ENCODE measurements at regions of chr21 and their contacts with region 1.

Region 1: GRCh38 chr21:41283211-41283818 is 33.3 kb upstream of the FAM3B start:
- DNase-seq: no peak
- H3K4me3 ChIP-seq: no peak overlapping the region
- H3K27ac ChIP-seq: no peak overlapping the region
- H3K4me1 ChIP-seq: peaks cover 0 to 3% (median 0%) of the 10 kb centered on the region in 4 donors
- H3K27me3 ChIP-seq: peaks cover 0 to 5% (median 0%) of the 10 kb centered on the region in 3 donors
- CTCF ChIP-seq: peak; percentile 56 to 74 (median 65)
- EP300 ChIP-seq: no peak
- POLR2A ChIP-seq: no peak

Region 2: GRCh38 chr21:40846587-40847411 is 436.5 kb before region 1 on chr21 and contains the start of gene DSCAM:
- intact Hi-C with region 1: no loop called
- DNase-seq: no peak
- H3K4me3 ChIP-seq: peak within 1 kb of the TSS in 2 of 4 donors; percentile 10 to 36
- H3K27ac ChIP-seq: no peak within 1 kb of the TSS
- H3K4me1 ChIP-seq: peaks cover 0 to 13% (median 4%) of the 10 kb centered on the region in 4 donors
- H3K27me3 ChIP-seq: peaks cover 4 to 45% (median 28%) of the 10 kb centered on the region in 3 donors
- CTCF ChIP-seq: no peak
- EP300 ChIP-seq: no peak
- POLR2A ChIP-seq: no peak
- total RNA-seq, gene DSCAM: 0.27 to 0.55 (median 0.34) TPM

Region 3: GRCh38 chr21:41361786-41362604 is 78.7 kb after region 1 on chr21 and contains the start of gene MX2:
- intact Hi-C with region 1: no loop called
- DNase-seq: peak; percentile 85
- H3K4me3 ChIP-seq: peak within 1 kb of the TSS; percentile 8 to 41 (median 34)
- H3K27ac ChIP-seq: peak within 1 kb of the TSS; percentile 70 to 80 (median 72)
- H3K4me1 ChIP-seq: peaks cover 0 to 22% (median 5%) of the 10 kb centered on the region in 4 donors
- H3K27me3 ChIP-seq: no peaks in the 10 kb centered on the region
- CTCF ChIP-seq: no peak
- EP300 ChIP-seq: peak in 1 of 4 donors; percentile 10
- POLR2A ChIP-seq: no peak
- total RNA-seq, gene MX2: 5.1 to 9.6 (median 7.3) TPM

Region 4: GRCh38 chr21:41777951-41778874 is 494.9 kb after region 1 on chr21:
- intact Hi-C with region 1: loop called (anchors 2 kb)
- DNase-seq: peak; percentile 94
- H3K4me3 ChIP-seq: no peak overlapping the region
- H3K27ac ChIP-seq: peak overlapping the region in 2 of 4 donors; percentile 35 to 54
- H3K4me1 ChIP-seq: peaks cover 0 to 8% (median 6%) of the 10 kb centered on the region in 4 donors
- H3K27me3 ChIP-seq: peaks cover 9 to 75% (median 16%) of the 10 kb centered on the region in 3 donors
- CTCF ChIP-seq: peak; percentile 77 to 96 (median 92)
- EP300 ChIP-seq: no peak
- POLR2A ChIP-seq: no peak